K562 (cell line): ENCODE measurements at regions of chr4 and their contacts with region 1.

Region 1: DNA sequence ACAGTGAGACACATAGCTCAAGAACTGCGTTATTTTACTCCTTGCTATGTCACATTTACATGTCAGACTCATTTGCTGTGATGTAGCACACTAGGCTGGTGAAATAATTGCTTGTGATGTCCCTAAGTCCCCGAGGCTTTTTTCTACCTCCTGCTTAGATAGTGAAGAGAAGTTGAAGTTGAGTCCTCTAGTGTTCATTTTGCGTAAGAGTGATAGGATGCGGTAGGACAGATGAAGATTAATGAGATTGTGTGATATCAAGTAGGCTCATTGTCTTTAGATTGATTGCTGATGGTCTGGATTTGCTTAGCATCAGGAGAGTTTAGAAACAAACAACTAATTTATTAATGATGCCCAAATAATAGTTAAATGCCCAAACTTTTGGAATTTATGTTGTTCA is 173.6 kb upstream of the NUDT6 start:
- DNase-seq: peak; percentile 14 to 44 (median 23)
- ATAC-seq: peak; percentile 88
- H3K4me3 ChIP-seq: no peak overlapping the region
- H3K27ac ChIP-seq: no peak overlapping the region
- H3K4me1 ChIP-seq: no peaks in the 10 kb centered on the region
- H3K27me3 ChIP-seq: no peaks in the 10 kb centered on the region
- CTCF ChIP-seq: peak; percentile 49 to 65 (median 63); a peak in 5 of 6 replicates
- EP300 ChIP-seq: no peak
- POLR2A ChIP-seq: no peak
- RAD21 ChIP-seq: peak in 1 of 2 experiments; percentile 55; a peak in 2 of 4 replicates

Region 2: GRCh38 chr4:122329876-122330565 is 766.0 kb before region 1 on chr4:
- CTCF ChIA-PET with region 1: no interaction called
- POLR2A ChIA-PET with region 1: no interaction called
- in situ Hi-C with region 1: no loop called
- intact Hi-C with region 1: no loop called
- DNase-seq: no peak
- ATAC-seq: no peak
- H3K4me3 ChIP-seq: no peak overlapping the region
- H3K27ac ChIP-seq: no peak overlapping the region
- H3K4me1 ChIP-seq: no peaks in the 10 kb centered on the region
- H3K27me3 ChIP-seq: no peaks in the 10 kb centered on the region
- CTCF ChIP-seq: no peak
- EP300 ChIP-seq: no peak
- POLR2A ChIP-seq: no peak
- RAD21 ChIP-seq: no peak

Region 3: GRCh38 chr4:122898370-122899150 is 197.5 kb before region 1 on chr4:
- CTCF ChIA-PET with region 1: no interaction called
- POLR2A ChIA-PET with region 1: no interaction called
- in situ Hi-C with region 1: no loop called
- intact Hi-C with region 1: no loop called
- DNase-seq: no peak
- ATAC-seq: no peak
- H3K4me3 ChIP-seq: no peak overlapping the region
- H3K27ac ChIP-seq: no peak overlapping the region
- H3K4me1 ChIP-seq: no peaks in the 10 kb centered on the region
- H3K27me3 ChIP-seq: no peaks in the 10 kb centered on the region
- CTCF ChIP-seq: no peak
- EP300 ChIP-seq: no peak
- POLR2A ChIP-seq: no peak
- RAD21 ChIP-seq: no peak

Region 4: DNA sequence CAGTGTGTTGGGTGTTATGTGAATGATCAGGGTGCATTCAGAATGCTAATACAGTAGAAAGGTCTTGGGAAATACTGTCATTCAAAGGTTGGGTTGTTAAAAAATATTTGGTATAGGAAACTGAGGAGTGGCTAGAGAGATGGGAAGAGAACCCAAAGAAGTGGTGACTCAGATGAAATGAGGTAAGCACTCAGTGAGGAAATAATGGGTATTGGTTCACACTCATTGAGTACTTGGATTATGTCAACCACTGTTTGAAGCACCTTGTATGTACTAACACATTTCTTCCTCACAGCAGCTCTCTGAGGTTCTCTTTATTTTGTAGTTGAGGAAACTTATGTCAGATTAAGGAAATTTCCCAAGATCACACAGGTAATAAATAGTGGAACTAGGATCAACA is 132.8 kb before region 1 on chr4:
- CTCF ChIA-PET with region 1: no interaction called
- POLR2A ChIA-PET with region 1: no interaction called
- in situ Hi-C with region 1: no loop called
- intact Hi-C with region 1: loop called (anchors 10 kb)
- DNase-seq: no peak
- ATAC-seq: no peak; the same call in 2 of the 3 replicates
- H3K4me3 ChIP-seq: no peak overlapping the region
- H3K27ac ChIP-seq: no peak overlapping the region
- H3K4me1 ChIP-seq: no peaks in the 10 kb centered on the region
- H3K27me3 ChIP-seq: no peaks in the 10 kb centered on the region
- CTCF ChIP-seq: no peak
- EP300 ChIP-seq: no peak
- POLR2A ChIP-seq: no peak
- RAD21 ChIP-seq: no peak